CD8-positive, alpha-beta T cell (primary cell): ENCODE measurements at regions of chr2 and their contacts with region 1.

Region 1: GRCh38 chr2:69848201-69848770 is 18.8 kb downstream of the GMCL1 start:
- DNase-seq: no peak
- ATAC-seq: no peak
- H3K4me3 ChIP-seq: no peak overlapping the region
- H3K4me3 Mint-ChIP-seq: no peak overlapping the region
- H3K27ac ChIP-seq: no peak overlapping the region
- H3K27ac Mint-ChIP-seq: peak overlapping the region; percentile 14
- H3K4me1 ChIP-seq: no peaks in the 10 kb centered on the region
- H3K4me1 Mint-ChIP-seq: no peaks in the 10 kb centered on the region
- H3K27me3 ChIP-seq: no peaks in the 10 kb centered on the region
- H3K27me3 Mint-ChIP-seq: no peaks in the 10 kb centered on the region
- CTCF ChIP-seq: no peak

Region 2: GRCh38 chr2:69390471-69390870 is 457.8 kb before region 1 on chr2:
- CTCF ChIA-PET with region 1: no interaction called
- POLR2A ChIA-PET with region 1: no interaction called
- intact Hi-C with region 1: no loop called
- DNase-seq: no peak
- ATAC-seq: no peak
- H3K4me3 ChIP-seq: no peak overlapping the region
- H3K4me3 Mint-ChIP-seq: no peak overlapping the region
- H3K27ac ChIP-seq: no peak overlapping the region
- H3K27ac Mint-ChIP-seq: no peak overlapping the region
- H3K4me1 ChIP-seq: peaks cover 16% of the 10 kb centered on the region
- H3K4me1 Mint-ChIP-seq: peaks cover 20% of the 10 kb centered on the region
- H3K27me3 ChIP-seq: no peaks in the 10 kb centered on the region
- H3K27me3 Mint-ChIP-seq: no peaks in the 10 kb centered on the region
- CTCF ChIP-seq: no peak

Region 3: GRCh38 chr2:69549421-69549820 is 298.9 kb before region 1 on chr2:
- CTCF ChIA-PET with region 1: no interaction called
- POLR2A ChIA-PET with region 1: no interaction called
- intact Hi-C with region 1: loop called in 1 of 2 experiments (anchors 10 kb)
- DNase-seq: no peak
- ATAC-seq: no peak
- H3K4me3 ChIP-seq: no peak overlapping the region
- H3K4me3 Mint-ChIP-seq: no peak overlapping the region
- H3K27ac ChIP-seq: no peak overlapping the region
- H3K27ac Mint-ChIP-seq: peak overlapping the region; percentile 29
- H3K4me1 ChIP-seq: peaks cover 18% of the 10 kb centered on the region
- H3K4me1 Mint-ChIP-seq: peaks cover 69% of the 10 kb centered on the region
- H3K27me3 ChIP-seq: no peaks in the 10 kb centered on the region
- H3K27me3 Mint-ChIP-seq: no peaks in the 10 kb centered on the region
- CTCF ChIP-seq: no peak

Region 4: DNA sequence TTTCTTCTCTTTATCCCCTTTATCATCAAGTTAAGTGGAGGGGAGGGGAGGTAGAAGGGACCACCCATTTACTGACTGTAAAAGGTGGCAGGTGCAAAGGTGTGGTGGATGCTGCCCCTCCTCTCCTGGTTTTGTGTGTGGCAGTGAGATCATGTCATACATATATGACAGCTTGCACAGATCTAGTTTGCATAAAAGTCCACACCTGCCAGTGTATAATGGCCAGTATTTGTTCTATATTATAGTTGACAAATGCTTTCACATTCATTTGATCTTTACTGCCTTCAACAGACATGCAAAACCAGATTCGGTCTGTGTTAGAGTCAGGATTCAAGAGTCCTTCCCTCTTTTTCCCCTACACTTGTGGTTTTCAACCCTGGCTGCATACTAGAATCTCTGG is 650.2 kb after region 1 on chr2:
- CTCF ChIA-PET with region 1: no interaction called
- POLR2A ChIA-PET with region 1: no interaction called
- intact Hi-C with region 1: no loop called
- DNase-seq: no peak
- ATAC-seq: no peak
- H3K4me3 ChIP-seq: no peak overlapping the region
- H3K4me3 Mint-ChIP-seq: no peak overlapping the region
- H3K27ac ChIP-seq: no peak overlapping the region
- H3K27ac Mint-ChIP-seq: no peak overlapping the region
- H3K4me1 ChIP-seq: no peaks in the 10 kb centered on the region
- H3K4me1 Mint-ChIP-seq: no peaks in the 10 kb centered on the region
- H3K27me3 ChIP-seq: no peaks in the 10 kb centered on the region
- H3K27me3 Mint-ChIP-seq: peaks cover 10% of the 10 kb centered on the region
- CTCF ChIP-seq: no peak

Region 5: DNA sequence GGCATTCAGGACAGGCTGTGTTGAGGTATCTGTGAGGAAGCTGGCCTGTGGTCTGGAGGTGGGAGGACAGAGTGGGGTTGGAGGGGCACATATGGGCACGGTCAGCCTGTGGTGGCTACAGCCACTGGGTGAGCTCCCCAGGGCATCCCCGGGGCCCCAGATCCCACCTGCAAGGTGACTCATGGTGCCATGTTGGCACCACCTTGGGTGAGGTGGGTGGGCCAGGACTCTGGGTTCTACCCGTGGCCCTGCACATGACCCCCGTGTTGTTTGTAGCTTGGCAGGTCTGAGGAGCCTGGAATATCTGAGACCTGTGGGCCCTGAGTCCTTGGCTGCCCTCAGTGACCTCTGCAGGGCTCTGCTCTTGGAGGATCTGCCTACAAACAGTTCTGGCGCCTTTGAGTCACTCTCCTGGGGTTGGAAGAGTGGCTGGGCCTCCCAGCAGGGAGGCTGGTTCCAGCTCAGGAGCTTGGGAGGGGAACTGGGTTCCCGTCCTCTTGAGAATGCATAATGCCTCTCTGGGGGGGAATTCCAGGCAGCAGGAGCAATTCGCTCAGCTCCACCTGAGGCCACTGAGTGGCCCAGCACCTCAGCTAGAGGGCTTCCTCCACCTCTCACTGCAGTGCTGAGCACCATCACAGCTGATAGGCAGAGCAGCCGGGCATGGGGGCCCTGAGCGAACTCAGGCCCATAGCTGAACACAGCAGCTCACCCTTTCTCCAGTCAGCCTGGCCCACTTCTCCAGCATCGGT is 1710.2 kb after region 1 on chr2:
- CTCF ChIA-PET with region 1: no interaction called
- POLR2A ChIA-PET with region 1: no interaction called
- intact Hi-C with region 1: no loop called
- DNase-seq: no peak
- ATAC-seq: no peak
- H3K4me3 ChIP-seq: no peak overlapping the region
- H3K4me3 Mint-ChIP-seq: no peak overlapping the region
- H3K27ac ChIP-seq: no peak overlapping the region
- H3K27ac Mint-ChIP-seq: no peak overlapping the region
- H3K4me1 ChIP-seq: no peaks in the 10 kb centered on the region
- H3K4me1 Mint-ChIP-seq: no peaks in the 10 kb centered on the region
- H3K27me3 ChIP-seq: no peaks in the 10 kb centered on the region
- H3K27me3 Mint-ChIP-seq: no peaks in the 10 kb centered on the region
- CTCF ChIP-seq: no peak